H1 (cell line): ENCODE measurements at regions of chr20 and their contacts with region 1.

Region 1: DNA sequence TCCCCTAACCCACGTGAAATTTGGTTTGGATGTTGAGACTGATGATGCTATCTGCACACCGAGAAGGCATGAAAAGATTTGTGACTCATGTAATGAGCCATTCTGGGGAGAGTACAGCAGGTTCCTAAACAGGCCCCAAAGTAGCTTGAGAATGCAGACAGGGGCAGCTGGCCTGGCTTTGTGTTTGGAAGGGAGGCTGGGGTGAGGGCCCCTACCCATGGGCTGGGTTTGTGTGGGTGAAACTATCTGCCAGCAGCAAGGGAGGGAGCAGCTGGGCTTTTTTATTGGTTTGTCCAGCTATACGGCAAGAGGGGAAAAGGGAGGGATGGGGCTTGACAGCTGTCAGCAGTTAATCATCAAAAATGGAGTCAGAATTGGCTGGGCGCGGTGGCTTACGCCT is 87.0 kb upstream of the RNF24 start:
- DNase-seq: peak in 1 of 2 experiments; percentile 31
- H3K4me3 ChIP-seq: no peak overlapping the region
- H3K27ac ChIP-seq: no peak overlapping the region
- H3K4me1 ChIP-seq: no peaks in the 10 kb centered on the region
- H3K27me3 ChIP-seq: no peaks in the 10 kb centered on the region
- CTCF ChIP-seq: no peak
- EP300 ChIP-seq: no peak
- POLR2A ChIP-seq: no peak
- RAD21 ChIP-seq: no peak

Region 2: DNA sequence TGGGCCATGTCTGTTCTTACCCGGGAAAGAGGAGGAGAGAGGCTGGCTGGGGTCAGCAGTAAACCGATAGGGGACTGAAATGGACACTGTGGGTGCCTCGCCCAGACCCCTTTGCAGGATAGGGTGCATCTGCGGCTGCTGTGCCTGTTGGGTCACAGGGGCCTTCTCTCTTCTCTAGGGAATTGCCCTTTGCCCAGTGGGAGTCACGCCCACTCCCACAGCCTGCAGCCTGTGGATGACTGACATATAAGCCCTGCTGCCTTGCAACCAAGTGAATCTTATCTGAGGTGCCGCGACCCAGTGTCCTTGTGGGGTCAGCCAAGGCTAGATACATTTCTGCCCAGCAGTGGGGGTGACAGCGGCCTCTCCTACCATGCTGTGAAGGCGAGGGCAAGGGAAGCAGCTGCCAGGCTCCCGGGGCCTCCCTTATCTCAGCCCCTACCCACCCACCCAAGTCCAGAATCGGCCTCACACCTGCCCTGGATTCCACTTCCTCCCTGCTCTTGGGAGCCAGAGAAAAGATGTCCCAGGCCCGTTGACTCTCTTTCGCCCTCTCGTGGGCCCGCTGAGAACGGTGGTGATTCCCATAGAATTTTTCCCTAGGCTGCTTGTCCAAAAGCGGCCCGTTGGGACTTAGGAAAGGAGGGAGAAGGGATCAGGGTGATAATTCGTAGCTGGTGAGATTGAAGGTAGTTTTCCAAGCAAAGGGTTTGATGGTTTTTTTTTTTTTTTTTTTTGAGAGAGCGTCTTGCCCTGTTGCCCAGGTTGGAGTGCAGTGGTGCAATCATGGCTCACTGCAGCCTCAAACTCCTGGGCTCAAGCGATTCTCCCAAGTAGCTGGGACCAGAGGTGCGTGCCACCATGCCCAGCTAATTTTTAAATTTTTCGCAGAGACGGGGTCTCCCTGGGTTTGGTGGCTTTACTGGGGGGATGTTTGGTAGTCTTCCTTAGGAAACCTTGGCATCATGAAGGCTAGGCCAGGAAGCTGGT is 10.6 kb before region 1 on chr20:
- CTCF ChIA-PET with region 1: interaction called, 22 read pairs
- POLR2A ChIA-PET with region 1: interaction called, 3 read pairs
- DNase-seq: peak in 1 of 2 experiments; percentile 91
- H3K4me3 ChIP-seq: no peak overlapping the region
- H3K27ac ChIP-seq: no peak overlapping the region
- H3K4me1 ChIP-seq: peaks cover 0 to 3% (median 2%) of the 10 kb centered on the region in 4 experiments; a peak in 2 of 7 replicates
- H3K27me3 ChIP-seq: no peaks in the 10 kb centered on the region
- CTCF ChIP-seq: peak; percentile 83 to 88 (median 86)
- EP300 ChIP-seq: no peak
- POLR2A ChIP-seq: no peak
- RAD21 ChIP-seq: peak; percentile 66 to 77